ENCODE measurements at regions of chr3 and their contacts with region 1.

Region 1: GRCh38 chr3:37190667-37191066 is 16.3 kb upstream of the LRRFIP2 start:
- DNase-seq: no peak
- H3K4me3 ChIP-seq: no peak overlapping the region
- H3K27ac ChIP-seq: no peak overlapping the region
- H3K4me1 ChIP-seq: no peaks in the 10 kb centered on the region
- H3K27me3 ChIP-seq: no peaks in the 10 kb centered on the region
- CTCF ChIP-seq: no peak

Region 2: GRCh38 chr3:37221407-37221806 is 30.7 kb after region 1 on chr3:
- CTCF ChIA-PET with region 1: interaction called, 12 read pairs
- POLR2A ChIA-PET with region 1: no interaction called
- intact Hi-C with region 1: no loop called
- DNase-seq: peak; percentile 24
- H3K4me3 ChIP-seq: no peak overlapping the region
- H3K27ac ChIP-seq: no peak overlapping the region
- H3K4me1 ChIP-seq: peaks cover 5% of the 10 kb centered on the region
- H3K27me3 ChIP-seq: no peaks in the 10 kb centered on the region
- CTCF ChIP-seq: no peak